G401 (cell line): ENCODE measurements at regions of chr2 and their contacts with region 1.

Region 1: DNA sequence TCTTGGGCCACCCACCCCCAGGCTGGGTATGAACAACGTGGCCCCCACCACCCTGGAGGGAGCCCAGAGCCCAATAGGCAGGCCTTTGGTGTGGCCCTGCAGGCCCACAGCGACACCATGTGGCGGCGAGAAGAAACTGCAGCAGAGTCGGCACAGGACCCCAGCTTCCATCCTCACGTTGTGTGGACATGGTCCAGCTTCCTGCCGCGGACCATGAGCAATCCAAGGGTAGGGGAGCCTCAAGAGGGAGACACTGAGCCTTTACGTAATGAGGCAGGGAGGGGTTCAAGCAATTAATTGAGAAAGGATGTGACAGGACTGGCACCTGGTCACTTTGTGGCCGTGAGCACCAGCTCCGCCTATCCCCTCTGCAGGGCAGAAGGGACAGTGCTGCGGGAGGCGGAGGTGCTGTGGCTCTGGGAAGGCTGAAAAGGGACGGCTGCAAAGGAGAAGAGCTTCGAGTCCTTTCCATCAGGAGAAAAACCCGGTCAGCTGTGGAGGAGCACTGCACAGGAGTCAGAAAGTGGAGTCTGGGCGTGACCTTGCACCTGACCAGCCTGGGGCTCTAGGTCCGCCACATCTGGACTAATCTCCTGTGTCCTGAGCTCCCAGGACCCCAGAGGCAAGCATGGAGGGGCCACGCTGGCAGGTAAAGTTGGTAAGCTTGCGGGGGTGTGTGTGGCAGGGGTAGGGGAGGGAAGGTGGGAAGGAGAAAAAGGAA is 44.8 kb downstream of the TMEM37 start:
- DNase-seq: peak; percentile 49

Region 2: DNA sequence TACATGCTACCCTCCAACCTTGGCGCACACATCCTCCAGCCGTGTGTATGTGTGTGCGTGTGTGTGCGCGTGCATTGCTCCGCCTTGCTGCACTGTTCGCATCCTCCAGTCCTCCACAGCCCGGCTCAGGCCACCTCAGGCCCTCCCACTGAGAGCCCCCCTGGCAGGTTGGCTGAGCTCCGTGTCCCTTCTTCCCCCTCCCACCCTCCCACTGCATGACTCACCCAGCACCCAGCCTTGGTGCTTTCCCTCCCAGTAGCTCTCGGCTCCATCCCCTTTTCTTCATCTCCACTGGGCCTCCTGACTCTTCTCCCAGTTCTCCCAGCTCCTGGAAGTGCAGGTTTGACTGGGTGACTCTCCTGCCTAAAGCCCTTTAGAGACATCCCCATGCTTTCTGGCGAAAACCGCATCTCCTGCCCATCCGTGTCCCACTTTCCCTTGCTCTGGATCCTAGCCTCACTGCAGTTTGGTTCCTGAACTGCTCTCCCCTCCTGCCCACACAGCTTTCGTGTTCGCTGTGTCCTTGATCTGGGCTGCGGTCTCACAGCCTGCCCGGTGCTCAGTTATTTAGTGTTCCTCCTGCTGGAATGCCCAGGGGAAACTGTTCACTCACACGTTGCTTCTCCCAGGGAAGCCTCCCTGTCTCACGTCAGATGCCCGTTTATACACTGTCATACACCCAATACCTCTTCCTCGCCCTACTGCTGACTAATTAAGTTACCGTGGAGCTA is 207.4 kb after region 1 on chr2:
- in situ Hi-C with region 1: loop called (anchors 10 kb)
- DNase-seq: peak; percentile 73